Vagina (tissue), 2 donors: ENCODE measurements at regions of chr6 and their contacts with region 1.

Region 1: DNA sequence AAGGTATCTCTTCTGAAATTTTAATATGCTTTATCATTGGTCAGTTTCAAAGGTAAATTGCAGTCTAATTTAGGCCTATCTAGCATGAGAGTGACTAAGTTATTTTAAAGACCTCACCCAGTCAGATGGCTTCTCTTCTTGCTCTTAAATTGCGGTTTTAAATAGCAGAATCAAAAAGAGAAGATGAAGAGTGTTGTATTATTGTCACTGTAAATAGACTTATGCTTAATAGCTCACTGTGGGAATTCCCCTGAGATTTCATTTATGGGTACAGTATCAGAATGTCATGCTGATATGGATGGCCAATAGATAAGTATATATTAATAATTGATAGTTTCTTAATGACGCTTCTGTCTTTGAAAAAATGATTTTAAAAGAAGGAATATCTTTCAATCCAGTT is 35.7 kb downstream of the AIG1 start:
- DNase-seq: no peak
- H3K4me3 ChIP-seq: no peak overlapping the region
- H3K27ac ChIP-seq: no peak overlapping the region
- H3K4me1 ChIP-seq: no peaks in the 10 kb centered on the region
- H3K27me3 ChIP-seq: no peaks in the 10 kb centered on the region
- CTCF ChIP-seq: no peak
- POLR2A ChIP-seq: no peak

Region 2: DNA sequence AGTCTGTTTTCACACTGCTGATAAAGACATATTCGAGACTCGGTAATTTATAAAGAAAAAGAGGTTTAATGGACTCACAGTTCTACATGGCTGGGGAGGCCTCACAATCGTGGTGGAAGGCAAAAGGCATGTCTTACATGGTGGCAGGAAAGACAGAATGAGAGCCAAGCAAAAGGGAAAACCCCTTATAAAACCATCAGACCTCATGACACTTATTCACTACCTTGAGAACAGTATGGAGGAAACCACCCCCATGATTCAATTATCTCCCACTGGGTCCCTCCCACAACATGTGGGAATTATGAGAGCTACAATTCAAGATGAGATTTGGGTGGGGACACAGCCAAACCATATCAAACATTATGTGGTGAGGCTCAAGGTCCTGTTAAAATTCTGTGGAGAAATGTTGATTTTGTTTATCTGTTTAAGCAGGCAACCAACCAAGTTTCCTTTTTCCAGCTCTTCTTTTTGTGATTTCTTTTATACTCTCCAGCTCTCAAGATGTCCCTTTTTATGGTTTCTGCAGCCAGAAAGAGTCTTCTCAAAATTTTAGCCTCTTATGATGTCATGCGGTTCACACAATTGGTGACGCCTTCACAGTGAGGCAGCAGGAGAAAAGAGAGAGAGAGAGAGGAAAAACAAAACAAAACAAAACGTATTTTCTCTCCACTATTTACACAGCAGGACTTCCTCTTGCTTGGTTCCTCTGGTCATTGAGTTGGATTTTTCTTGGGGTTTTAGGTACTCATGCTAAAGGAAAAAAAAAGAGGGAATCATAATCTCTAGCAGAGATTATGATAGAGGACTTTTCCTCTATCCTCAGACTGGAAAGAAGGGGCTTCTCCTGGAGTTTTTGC is 17.7 kb before region 1 on chr6:
- intact Hi-C with region 1: loop called (anchors 1 kb)
- DNase-seq: no peak
- H3K4me3 ChIP-seq: no peak overlapping the region
- H3K27ac ChIP-seq: no peak overlapping the region
- H3K4me1 ChIP-seq: no peaks in the 10 kb centered on the region
- H3K27me3 ChIP-seq: no peaks in the 10 kb centered on the region
- CTCF ChIP-seq: no peak
- POLR2A ChIP-seq: no peak

Region 3: GRCh38 chr6:143271024-143271423 is 174.6 kb after region 1 on chr6:
- intact Hi-C with region 1: no loop called
- DNase-seq: no peak
- H3K4me3 ChIP-seq: no peak overlapping the region
- H3K27ac ChIP-seq: no peak overlapping the region
- H3K4me1 ChIP-seq: peaks cover 11% of the 10 kb centered on the region
- H3K27me3 ChIP-seq: no peaks in the 10 kb centered on the region
- CTCF ChIP-seq: no peak
- POLR2A ChIP-seq: no peak